BJ (cell line): ENCODE measurements at regions of chr20 and their contacts with region 1.

Region 1: DNA sequence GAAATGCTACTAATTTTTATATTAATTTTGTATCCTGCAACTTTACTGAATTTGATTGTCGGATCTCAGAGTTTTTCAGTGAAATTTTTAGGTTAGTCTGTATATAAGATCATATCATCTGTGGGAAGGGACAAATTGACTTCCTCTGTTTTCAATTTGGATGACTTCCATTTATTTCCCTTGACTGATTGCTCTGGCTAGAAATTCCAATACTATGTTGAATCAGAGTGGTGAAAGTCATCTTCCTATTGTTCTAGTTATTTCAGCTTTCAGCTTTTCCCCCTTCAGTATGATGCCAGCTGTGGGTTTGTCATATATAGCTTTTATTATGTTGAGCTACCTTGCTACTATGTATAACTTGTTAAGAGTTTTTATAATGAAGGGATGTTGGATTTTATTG is 771.2 kb downstream of the KIF16B start:
- DNase-seq: no peak
- H3K4me3 ChIP-seq: no peak overlapping the region
- H3K27me3 ChIP-seq: no peaks in the 10 kb centered on the region
- CTCF ChIP-seq: no peak

Region 2: DNA sequence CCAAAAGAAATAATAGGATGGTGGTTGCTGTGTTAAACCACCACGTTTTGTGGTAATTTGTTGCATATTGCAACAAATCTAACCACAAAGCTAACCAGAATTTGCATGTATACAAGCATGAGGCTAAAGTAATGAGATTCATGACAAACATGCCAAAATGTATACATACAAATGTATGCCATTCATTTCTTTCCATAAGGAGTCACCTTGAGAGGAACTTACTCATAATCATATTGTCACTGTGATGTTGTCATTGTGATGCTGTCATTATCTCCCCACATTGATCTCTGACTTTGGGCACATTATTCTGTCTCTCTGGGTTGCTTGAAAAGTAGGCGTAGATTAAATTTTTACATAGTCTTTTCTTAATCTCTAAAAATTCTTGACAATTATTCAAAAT is 577.8 kb before region 1 on chr20:
- CTCF ChIA-PET with region 1: no interaction called
- POLR2A ChIA-PET with region 1: interaction called, 21 read pairs
- DNase-seq: no peak
- H3K4me3 ChIP-seq: no peak overlapping the region
- H3K27me3 ChIP-seq: no peaks in the 10 kb centered on the region
- CTCF ChIP-seq: no peak

Region 3: DNA sequence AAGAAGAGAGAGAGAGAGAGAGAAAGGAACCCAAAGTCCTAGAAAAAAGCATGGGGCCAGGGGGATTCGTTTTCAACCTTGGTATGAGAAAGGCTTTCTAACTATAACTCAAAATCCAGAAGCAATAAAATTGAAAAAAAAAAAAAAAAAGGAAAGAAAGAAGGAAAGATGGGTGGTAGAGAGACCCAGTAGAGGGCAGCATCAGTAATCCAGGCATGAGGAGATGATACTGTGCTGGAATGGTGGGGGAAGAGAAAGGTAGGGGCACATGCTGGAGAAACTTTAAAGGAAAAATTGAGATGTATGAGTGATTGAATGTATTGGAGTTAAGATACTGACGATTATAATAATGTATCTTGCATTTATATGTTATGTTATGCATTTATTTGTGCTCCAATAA is 423.9 kb before region 1 on chr20:
- CTCF ChIA-PET with region 1: no interaction called
- POLR2A ChIA-PET with region 1: no interaction called
- DNase-seq: no peak
- H3K4me3 ChIP-seq: no peak overlapping the region
- H3K27me3 ChIP-seq: no peaks in the 10 kb centered on the region
- CTCF ChIP-seq: peak; percentile 20; the same call in 1 of the 2 replicates

Region 4: DNA sequence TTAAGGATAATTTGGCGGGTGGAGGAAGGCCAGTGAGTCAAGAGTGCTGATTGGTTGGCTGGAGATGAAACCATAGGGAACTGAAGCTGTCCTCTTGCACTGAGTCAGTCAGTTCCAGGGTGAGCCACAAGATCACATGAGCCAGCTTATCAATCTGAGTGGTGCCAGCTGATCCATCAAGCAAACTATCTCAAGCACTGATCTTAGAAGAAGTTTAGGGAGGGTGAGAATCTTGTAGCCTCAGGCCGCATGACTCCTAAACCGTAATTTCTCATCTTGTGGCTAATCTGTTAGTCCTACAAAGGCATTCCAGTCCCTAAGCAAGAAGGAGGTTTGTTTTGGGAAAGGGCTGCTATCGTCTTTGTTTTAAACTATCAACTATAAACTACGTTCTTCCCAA is 183.1 kb before region 1 on chr20:
- CTCF ChIA-PET with region 1: no interaction called
- POLR2A ChIA-PET with region 1: no interaction called
- DNase-seq: no peak
- H3K4me3 ChIP-seq: no peak overlapping the region
- H3K27me3 ChIP-seq: no peaks in the 10 kb centered on the region
- CTCF ChIP-seq: no peak

Region 5: DNA sequence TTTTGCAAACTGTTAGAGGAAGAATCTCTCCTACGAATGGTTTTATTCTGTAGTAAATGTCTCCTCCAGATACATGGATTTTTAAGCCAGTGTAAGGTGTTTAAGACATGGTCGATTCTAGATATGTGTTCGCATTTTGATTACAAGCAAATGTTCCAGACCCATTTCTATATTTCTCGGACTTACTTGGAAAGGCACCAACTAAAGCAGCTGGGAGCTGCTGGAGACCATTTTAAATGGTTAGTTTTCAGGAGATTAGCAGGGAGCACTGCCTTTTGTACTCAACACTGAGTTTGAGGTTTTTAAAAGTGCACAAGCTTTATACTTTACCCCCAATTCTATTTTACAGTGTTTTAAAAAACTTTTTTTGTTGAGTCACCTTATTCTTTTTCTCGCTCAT is 85.8 kb before region 1 on chr20:
- CTCF ChIA-PET with region 1: no interaction called
- POLR2A ChIA-PET with region 1: no interaction called
- DNase-seq: no peak
- H3K4me3 ChIP-seq: no peak overlapping the region
- H3K27me3 ChIP-seq: no peaks in the 10 kb centered on the region
- CTCF ChIP-seq: no peak

Region 6: DNA sequence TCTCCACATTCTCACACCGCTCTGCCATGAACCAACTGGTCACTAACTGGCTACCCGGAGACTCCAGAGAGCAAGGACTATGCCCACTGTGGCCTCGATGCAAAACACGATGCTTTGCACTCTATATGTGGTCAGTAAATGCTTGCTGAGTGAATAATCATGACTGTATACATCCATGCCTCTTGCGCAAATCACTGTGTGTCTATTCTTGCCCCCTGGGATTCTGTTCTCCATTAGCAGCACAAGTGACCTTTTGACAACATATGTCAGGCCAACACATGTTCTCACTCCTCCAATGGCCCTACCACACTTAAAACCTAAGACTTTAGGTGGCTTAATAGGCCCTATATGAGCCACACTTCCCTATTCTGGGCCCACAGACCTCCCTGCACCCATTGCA is 754.3 kb after region 1 on chr20:
- CTCF ChIA-PET with region 1: no interaction called
- POLR2A ChIA-PET with region 1: no interaction called
- DNase-seq: no peak
- H3K4me3 ChIP-seq: no peak overlapping the region
- H3K27me3 ChIP-seq: no peaks in the 10 kb centered on the region
- CTCF ChIP-seq: no peak